ENCODE measurements at regions of chr1 and their contacts with region 1.

Region 1: DNA sequence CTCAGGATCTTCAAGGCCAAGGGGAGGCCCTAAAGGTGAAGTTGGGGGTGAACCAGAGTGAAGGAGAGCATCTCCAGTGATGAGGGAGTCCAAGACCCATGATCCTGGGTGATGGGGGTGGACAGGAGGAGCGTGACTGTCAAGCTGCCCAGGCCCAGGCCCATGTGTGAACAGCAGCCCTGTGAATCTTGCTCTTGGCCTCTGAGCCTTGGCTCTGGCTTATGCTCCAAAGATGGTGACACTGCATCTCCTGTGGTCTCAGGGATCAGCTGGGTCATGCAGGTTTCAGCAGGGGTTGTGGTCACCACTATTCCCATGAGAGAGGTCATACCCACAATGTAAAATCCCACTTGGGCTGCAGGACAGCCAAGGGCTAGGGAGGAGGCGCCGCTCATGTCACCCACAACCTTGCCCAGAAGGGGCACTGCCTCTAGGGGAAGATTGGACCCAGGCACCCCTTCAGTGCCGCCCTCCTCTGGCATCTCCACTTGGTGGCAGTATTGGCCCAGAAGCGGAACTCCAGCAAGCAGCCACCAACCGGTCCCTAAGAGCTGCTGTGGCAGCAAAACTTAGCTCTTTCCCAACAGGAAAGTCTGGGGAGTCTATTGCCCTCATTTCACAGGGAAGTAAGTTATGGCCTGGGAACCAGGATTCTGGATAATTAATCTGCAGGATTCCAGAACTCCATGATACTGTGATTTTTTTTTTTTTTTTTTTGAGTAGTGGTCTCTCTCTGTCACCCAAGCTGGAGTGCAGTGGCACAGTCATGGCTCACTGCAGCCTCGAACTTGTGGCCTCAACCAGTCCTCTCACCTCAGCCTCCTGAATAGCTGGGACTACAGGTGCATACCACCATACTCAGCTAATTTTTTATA is 7.5 kb upstream of the WNT3A start:
- DNase-seq: peak; percentile 80 to 91
- H3K4me3 ChIP-seq: no peak overlapping the region
- H3K27ac ChIP-seq: no peak overlapping the region
- H3K4me1 ChIP-seq: no peaks in the 10 kb centered on the region
- H3K27me3 ChIP-seq: no peaks in the 10 kb centered on the region
- CTCF ChIP-seq: peak; percentile 93

Region 2: GRCh38 chr1:228122921-228123441 is 123.7 kb after region 1 on chr1:
- CTCF ChIA-PET with region 1: no interaction called
- POLR2A ChIA-PET with region 1: no interaction called
- intact Hi-C with region 1: no loop called
- DNase-seq: no peak
- H3K4me3 ChIP-seq: no peak overlapping the region
- H3K27ac ChIP-seq: no peak overlapping the region
- H3K4me1 ChIP-seq: no peaks in the 10 kb centered on the region
- H3K27me3 ChIP-seq: no peaks in the 10 kb centered on the region
- CTCF ChIP-seq: no peak

Region 3: GRCh38 chr1:228139944-228140656 is 140.8 kb after region 1 on chr1 and contains the start of gene GUK1:
- CTCF ChIA-PET with region 1: interaction called, 4 read pairs
- POLR2A ChIA-PET with region 1: interaction called, 13 read pairs
- intact Hi-C with region 1: no loop called
- DNase-seq: peak; percentile 98 to 100
- H3K4me3 ChIP-seq: peak within 1 kb of the TSS; percentile 90
- H3K27ac ChIP-seq: peak within 1 kb of the TSS; percentile 64
- H3K4me1 ChIP-seq: peaks cover 9% of the 10 kb centered on the region
- H3K27me3 ChIP-seq: no peaks in the 10 kb centered on the region
- CTCF ChIP-seq: no peak; the same call in 1 of the 2 replicates
- total RNA-seq, gene GUK1: 239 and 278 TPM in 2 replicates

Region 4: GRCh38 chr1:228212966-228213844 is 213.9 kb after region 1 on chr1:
- CTCF ChIA-PET with region 1: no interaction called
- POLR2A ChIA-PET with region 1: no interaction called
- intact Hi-C with region 1: loop called (anchors 1 kb)
- DNase-seq: peak; percentile 71 to 88
- H3K4me3 ChIP-seq: peak overlapping the region; percentile 62
- H3K27ac ChIP-seq: no peak overlapping the region
- H3K4me1 ChIP-seq: peaks cover 9% of the 10 kb centered on the region
- H3K27me3 ChIP-seq: no peaks in the 10 kb centered on the region
- CTCF ChIP-seq: peak; percentile 60

Region 5: DNA sequence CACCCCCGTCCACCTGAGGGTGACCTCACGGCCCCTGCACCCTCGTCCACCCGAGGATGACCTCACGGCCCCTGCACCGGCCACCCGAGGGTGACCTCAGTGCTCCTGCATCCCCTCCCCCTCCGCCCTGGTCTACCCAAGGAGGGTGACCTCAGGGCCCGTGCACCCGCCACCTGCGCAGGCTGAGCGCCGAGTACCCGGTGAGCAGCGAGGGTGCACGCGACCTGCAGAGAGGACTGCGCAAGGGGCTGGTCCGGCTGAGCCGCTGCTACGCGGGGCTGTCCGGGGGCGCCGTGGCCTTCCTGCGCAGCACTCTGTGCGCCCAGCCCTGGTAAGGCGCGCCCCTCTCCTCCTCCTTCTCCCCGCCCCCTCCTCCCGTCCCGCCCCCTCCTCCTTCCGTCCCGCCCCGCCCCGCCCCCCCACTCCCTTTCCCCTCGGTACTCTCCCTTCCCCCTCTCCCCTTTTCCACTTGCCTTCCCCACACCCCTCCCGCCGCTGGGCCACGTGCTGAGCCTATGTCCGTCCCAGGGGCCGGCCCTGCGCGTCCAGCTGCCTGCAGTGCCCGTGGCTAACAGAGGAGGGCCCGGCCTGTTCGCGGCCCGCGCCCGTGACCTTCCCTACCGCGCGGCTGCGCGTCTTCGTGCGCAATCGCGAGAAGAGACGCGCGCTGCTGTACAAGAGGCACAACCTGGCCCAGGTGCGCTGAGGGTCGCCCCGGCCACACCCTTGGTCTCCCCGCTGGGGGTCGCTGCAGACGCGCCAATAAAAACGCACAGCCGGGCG is 379.0 kb after region 1 on chr1:
- CTCF ChIA-PET with region 1: no interaction called
- POLR2A ChIA-PET with region 1: no interaction called
- intact Hi-C with region 1: loop called (anchors 5 kb)
- DNase-seq: peak; percentile 78 to 95
- H3K4me3 ChIP-seq: peak overlapping the region; percentile 67
- H3K27ac ChIP-seq: no peak overlapping the region
- H3K4me1 ChIP-seq: peaks cover 15% of the 10 kb centered on the region
- H3K27me3 ChIP-seq: no peaks in the 10 kb centered on the region
- CTCF ChIP-seq: peak; percentile 82

Region 6: DNA sequence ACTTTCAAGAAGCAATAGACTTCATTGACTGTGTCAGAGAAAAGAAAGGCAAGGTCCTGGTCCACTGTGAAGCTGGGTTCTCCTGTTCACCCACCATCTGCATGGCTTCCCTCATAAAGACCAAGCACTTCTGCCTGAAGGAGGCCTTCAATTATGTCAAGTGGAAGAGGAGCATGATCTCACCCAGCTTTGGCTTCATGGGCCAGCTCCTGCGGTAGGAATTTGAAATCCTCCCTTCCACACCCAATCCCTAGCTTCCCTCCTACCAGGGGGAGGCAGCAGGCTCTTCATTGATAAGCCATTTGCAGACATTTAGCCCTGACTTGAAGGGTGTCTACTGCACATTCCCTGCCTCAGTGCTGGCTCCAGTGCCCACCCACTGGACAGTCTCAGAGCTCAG is 651.7 kb after region 1 on chr1:
- CTCF ChIA-PET with region 1: interaction called, 10 read pairs
- POLR2A ChIA-PET with region 1: no interaction called
- intact Hi-C with region 1: no loop called
- DNase-seq: no peak
- H3K4me3 ChIP-seq: no peak overlapping the region
- H3K27ac ChIP-seq: no peak overlapping the region
- H3K4me1 ChIP-seq: no peaks in the 10 kb centered on the region
- H3K27me3 ChIP-seq: peaks cover 9% of the 10 kb centered on the region
- CTCF ChIP-seq: no peak